ENCODE measurements at regions of chr3 and their contacts with region 1.

Region 1: GRCh38 chr3:19543212-19543841 is 390.7 kb downstream of the EFHB start:
- DNase-seq: no peak
- H3K4me3 ChIP-seq: no peak overlapping the region
- H3K27ac ChIP-seq: no peak overlapping the region
- H3K4me1 ChIP-seq: peaks cover 4% of the 10 kb centered on the region
- H3K27me3 ChIP-seq: no peaks in the 10 kb centered on the region
- CTCF ChIP-seq: peak; percentile 28

Region 2: DNA sequence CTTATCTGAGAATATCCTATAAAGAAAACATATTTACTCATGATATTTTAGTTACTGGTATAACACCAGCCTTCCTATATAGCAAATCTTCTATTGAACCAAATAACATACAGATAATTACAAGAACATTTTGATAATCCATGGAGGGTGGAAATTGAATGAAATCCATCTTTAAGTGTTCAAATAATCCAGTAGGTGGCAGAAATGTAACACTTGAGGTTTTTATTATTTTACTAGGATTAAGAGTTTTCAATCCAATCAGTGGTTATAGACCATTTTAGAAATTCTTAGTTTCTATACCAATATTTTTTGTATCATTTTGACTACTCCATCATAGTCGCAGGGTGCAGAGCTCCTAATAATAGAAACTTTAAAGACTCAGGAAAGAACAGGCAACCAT is 496.9 kb before region 1 on chr3:
- intact Hi-C with region 1: loop called (anchors 10 kb)
- DNase-seq: no peak
- H3K4me3 ChIP-seq: no peak overlapping the region
- H3K27ac ChIP-seq: no peak overlapping the region
- H3K4me1 ChIP-seq: no peaks in the 10 kb centered on the region
- H3K27me3 ChIP-seq: no peaks in the 10 kb centered on the region
- CTCF ChIP-seq: no peak

Region 3: GRCh38 chr3:19348929-19349564 is 194.3 kb before region 1 on chr3:
- intact Hi-C with region 1: loop called (anchors 2 kb)
- DNase-seq: peak; percentile 18
- H3K4me3 ChIP-seq: no peak overlapping the region
- H3K27ac ChIP-seq: no peak overlapping the region
- H3K4me1 ChIP-seq: no peaks in the 10 kb centered on the region
- H3K27me3 ChIP-seq: no peaks in the 10 kb centered on the region
- CTCF ChIP-seq: peak; percentile 65

Region 4: GRCh38 chr3:19866751-19867347 is 323.5 kb after region 1 on chr3:
- intact Hi-C with region 1: loop called (anchors 10 kb)
- DNase-seq: peak; percentile 40
- H3K4me3 ChIP-seq: no peak overlapping the region
- H3K27ac ChIP-seq: no peak overlapping the region
- H3K4me1 ChIP-seq: no peaks in the 10 kb centered on the region
- H3K27me3 ChIP-seq: no peaks in the 10 kb centered on the region
- CTCF ChIP-seq: peak; percentile 75